ENCODE measurements at regions of chr16 and their contacts with region 1.

Region 1: GRCh38 chr16:47664653-47665325 is 203.7 kb downstream of the PHKB start:
- H3K4me3 Mint-ChIP-seq: no peak overlapping the region
- H3K27ac Mint-ChIP-seq: no peak overlapping the region
- H3K4me1 Mint-ChIP-seq: no peaks in the 10 kb centered on the region
- H3K27me3 Mint-ChIP-seq: no peaks in the 10 kb centered on the region

Region 2: DNA sequence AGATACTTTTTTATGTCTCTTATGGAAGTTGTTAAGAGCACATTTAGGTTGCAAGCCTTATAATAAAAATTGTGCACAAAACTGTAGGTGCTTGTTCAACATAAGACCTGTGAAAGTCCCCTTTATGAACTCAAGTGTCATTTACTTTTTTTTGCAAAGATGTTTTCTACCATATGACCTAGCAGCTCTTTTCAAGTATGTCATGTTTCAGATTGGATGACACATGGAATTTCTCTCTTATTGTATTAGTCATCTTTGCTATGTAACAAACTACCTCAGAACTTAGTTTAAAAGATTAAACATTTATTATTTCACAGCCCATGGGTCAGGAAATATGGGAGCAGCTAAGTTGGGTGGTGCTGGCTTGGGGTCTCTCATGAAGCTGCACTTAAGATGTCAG is 145.8 kb before region 1 on chr16:
- intact Hi-C with region 1: loop called (anchors 10 kb)
- H3K4me3 Mint-ChIP-seq: no peak overlapping the region
- H3K27ac Mint-ChIP-seq: no peak overlapping the region
- H3K4me1 Mint-ChIP-seq: peaks cover 18% of the 10 kb centered on the region
- H3K27me3 Mint-ChIP-seq: no peaks in the 10 kb centered on the region

Region 3: DNA sequence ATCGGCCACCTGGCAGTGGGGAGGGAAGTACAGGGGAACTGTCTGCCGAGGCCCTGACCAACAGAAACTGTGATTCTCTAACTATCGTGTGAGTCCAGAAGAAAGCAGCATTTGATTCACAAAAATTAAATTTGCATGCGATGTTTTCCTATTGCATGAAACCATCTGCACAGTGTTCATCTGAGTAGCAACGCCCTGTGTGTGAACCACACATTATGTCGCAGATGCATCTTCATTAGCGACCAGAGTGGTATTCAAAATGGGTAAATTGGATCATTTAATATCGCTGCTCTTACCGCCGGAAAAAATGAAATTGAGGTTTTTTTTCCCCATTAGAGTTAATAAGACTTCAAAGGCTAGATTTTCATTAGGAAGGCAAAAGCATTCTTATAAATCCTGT is 230.4 kb after region 1 on chr16:
- intact Hi-C with region 1: no loop called
- H3K4me3 Mint-ChIP-seq: no peak overlapping the region
- H3K27ac Mint-ChIP-seq: no peak overlapping the region
- H3K4me1 Mint-ChIP-seq: no peaks in the 10 kb centered on the region
- H3K27me3 Mint-ChIP-seq: no peaks in the 10 kb centered on the region

Measured in dendritic cell treated with granulocyte-macrophage colony-stimulating factor and Interleukin-4, amounts not matched to agents 40 ng/mL and 50 ng/mL, for 4 days (primary cell).